ENCODE measurements at regions of chr17 and their contacts with region 1.

Region 1: DNA sequence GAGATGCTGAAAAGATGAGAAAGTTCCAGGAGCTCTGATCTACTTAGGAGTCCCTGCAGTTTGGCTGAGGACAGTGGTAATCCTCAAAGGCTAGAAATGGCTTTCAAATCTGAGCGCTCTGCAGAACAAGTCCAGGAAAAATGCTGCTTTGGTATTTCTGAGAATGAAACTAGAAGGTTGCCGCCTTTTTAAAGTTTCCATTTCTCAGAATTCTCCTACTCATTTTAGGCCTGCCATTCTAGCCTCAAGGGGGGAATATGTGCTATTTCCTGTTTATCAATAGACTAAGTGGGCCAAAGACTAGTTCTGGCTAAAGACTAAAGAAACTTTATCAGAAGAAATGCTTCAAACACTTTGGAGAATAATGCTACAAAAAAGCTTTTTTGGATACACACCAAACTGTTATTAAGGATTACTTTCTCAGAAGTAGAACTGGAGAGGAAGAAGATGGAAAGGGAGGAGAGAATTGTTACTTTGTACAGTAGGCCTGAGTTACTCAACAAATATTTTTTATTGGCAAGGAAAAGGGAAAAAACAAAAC is at the start of gene SLFN12L:
- DNase-seq: no peak
- H3K4me3 ChIP-seq: no peak within 1 kb of the TSS
- H3K27ac ChIP-seq: no peak within 1 kb of the TSS
- H3K4me1 ChIP-seq: no peaks in the 10 kb centered on the region
- H3K27me3 ChIP-seq: no peaks in the 10 kb centered on the region
- CTCF ChIP-seq: no peak
- total RNA-seq, gene SLFN12L: not detected in 2 replicates

Region 2: DNA sequence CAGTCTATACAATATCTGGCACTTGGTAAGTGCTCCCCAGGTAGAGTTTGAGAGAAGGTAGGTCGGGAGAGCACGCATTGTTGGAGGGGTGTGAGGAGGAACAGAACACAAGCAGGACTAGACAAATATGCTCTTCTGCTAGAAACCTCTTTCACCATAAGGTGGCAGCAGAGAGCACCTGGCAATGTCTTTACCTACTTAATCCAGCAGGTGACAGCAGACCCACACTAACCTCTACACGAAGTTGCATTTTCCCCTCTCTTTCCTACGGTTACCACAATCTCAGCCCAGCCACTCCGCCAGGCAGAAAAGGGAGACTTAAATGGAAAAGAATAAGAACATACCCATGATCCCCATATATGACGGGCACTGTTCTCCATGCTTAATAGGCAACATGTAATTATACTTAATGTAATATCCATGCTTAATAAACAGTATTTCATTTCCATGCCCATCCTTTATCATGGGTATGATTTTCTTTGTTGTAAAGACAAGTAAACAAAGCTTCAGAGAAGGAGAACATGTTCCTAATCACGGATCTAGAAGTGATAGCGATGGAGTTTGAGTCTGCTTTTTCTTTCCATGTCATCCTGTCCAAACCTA is 1337.6 kb before region 1 on chr17:
- CTCF ChIA-PET with region 1: no interaction called
- POLR2A ChIA-PET with region 1: no interaction called
- intact Hi-C with region 1: loop called (anchors 10 kb)
- DNase-seq: peak; percentile 50 to 60
- H3K4me3 ChIP-seq: no peak overlapping the region
- H3K27ac ChIP-seq: no peak overlapping the region
- H3K4me1 ChIP-seq: no peaks in the 10 kb centered on the region
- H3K27me3 ChIP-seq: peaks cover 9% of the 10 kb centered on the region
- CTCF ChIP-seq: peak; percentile 98

Region 3: DNA sequence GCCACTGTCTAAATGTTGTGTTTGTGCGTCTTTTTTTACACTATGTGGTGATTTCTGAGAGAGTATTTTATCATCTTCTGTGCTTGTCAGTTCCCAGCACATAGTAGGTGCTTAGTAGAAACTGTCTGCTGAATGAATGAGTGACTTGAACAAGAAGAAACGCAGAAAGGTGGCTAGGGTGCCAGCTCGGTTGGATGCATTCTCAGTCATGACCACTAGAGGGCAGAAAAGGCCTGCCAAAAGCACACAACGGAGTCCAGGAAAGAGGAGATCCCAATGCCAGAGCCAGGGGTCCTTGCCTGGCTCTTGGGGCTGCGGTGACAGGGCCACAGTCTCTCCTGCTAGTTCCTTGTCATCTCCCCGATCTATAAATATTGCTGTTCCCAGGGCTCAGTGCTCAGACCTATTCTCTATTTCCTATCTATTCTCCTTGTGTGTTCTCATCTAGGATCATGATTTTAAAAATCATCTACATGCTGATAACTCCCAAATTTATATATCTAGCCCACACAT is 1117.4 kb before region 1 on chr17:
- CTCF ChIA-PET with region 1: no interaction called
- POLR2A ChIA-PET with region 1: no interaction called
- intact Hi-C with region 1: loop called (anchors 5 kb)
- DNase-seq: peak; percentile 46 to 47
- H3K4me3 ChIP-seq: no peak overlapping the region
- H3K27ac ChIP-seq: no peak overlapping the region
- H3K4me1 ChIP-seq: no peaks in the 10 kb centered on the region
- H3K27me3 ChIP-seq: peaks cover 36% of the 10 kb centered on the region
- CTCF ChIP-seq: peak; percentile 92

Region 4: GRCh38 chr17:34980681-34981537 is 556.8 kb before region 1 on chr17:
- CTCF ChIA-PET with region 1: no interaction called
- POLR2A ChIA-PET with region 1: no interaction called
- intact Hi-C with region 1: loop called (anchors 10 kb)
- DNase-seq: peak; percentile 69 to 84
- H3K4me3 ChIP-seq: peak overlapping the region; percentile 62
- H3K27ac ChIP-seq: peak overlapping the region; percentile 87
- H3K4me1 ChIP-seq: peaks cover 9% of the 10 kb centered on the region
- H3K27me3 ChIP-seq: no peaks in the 10 kb centered on the region
- CTCF ChIP-seq: peak; percentile 48; the same call in 1 of the 2 replicates

Region 5: DNA sequence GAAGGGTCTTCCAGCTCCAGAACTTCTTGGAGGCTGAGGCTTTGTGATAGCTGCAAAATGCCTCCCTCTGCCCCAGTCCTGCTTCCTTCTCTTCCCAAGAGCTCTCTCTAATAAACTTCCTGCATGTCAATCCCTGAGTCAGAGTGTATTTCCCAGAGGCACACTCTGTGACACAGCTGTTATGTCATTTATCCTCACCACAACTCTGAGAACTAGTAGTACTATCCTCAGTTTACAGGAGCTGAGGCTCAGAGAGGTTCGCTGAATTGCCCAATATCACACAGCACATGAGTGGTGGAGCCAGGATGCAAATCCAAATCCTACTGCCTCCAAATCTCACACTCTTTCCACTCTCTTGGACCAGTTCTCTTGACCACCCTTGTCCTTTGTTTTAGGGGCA is 370.0 kb before region 1 on chr17:
- CTCF ChIA-PET with region 1: interaction called, 11 read pairs
- POLR2A ChIA-PET with region 1: no interaction called
- intact Hi-C with region 1: no loop called
- DNase-seq: no peak
- H3K4me3 ChIP-seq: no peak overlapping the region
- H3K27ac ChIP-seq: no peak overlapping the region
- H3K4me1 ChIP-seq: no peaks in the 10 kb centered on the region
- H3K27me3 ChIP-seq: peaks cover 20% of the 10 kb centered on the region
- CTCF ChIP-seq: no peak

Region 6: GRCh38 chr17:35312790-35313711 is 224.6 kb before region 1 on chr17:
- CTCF ChIA-PET with region 1: interaction called, 4 read pairs
- POLR2A ChIA-PET with region 1: no interaction called
- intact Hi-C with region 1: loop called (anchors 1 kb)
- DNase-seq: peak in 1 of 2 experiments; percentile 22
- H3K4me3 ChIP-seq: no peak overlapping the region
- H3K27ac ChIP-seq: no peak overlapping the region
- H3K4me1 ChIP-seq: no peaks in the 10 kb centered on the region
- H3K27me3 ChIP-seq: peaks cover 4% of the 10 kb centered on the region; the same call in 1 of the 2 replicates
- CTCF ChIP-seq: peak; percentile 82

Region 7: DNA sequence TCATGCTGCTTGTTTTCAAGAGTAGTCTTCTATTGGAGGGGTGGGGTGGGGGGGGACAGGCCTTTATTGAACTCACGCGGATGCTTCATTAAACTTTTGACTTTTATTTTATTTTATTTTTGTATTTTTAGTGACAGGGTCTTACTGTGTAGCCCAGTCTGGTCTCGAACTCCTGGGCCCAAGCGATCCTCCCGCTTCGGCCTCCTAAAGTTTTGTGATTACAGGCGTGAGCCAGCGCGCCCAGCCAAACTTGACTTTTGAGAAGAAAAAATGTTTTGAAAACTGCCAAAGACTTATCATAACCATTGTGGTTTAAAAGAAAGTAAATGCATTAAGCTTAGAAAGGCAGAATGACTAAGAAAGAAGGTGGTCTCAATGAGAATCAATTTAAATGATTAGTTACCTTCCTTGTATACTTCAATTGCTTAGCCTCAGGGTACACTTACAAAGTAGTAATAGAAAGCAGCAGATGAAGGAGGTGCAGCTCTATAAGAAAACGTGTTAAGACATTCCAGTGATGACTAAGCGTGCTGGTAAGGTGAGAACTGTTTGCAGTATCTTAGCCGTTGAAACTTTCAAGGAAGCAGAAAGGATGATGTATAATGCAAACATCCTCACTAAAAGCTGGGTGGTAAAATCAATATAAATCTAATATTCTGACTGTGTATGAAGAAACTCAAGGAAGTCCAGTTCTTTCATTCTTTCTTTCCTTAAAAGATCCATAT is 50.7 kb after region 1 on chr17:
- CTCF ChIA-PET with region 1: no interaction called
- POLR2A ChIA-PET with region 1: no interaction called
- intact Hi-C with region 1: no loop called
- DNase-seq: peak; percentile 22 to 99
- H3K4me3 ChIP-seq: peak overlapping the region; percentile 97
- H3K27ac ChIP-seq: peak overlapping the region; percentile 92
- H3K4me1 ChIP-seq: peaks cover 16% of the 10 kb centered on the region
- H3K27me3 ChIP-seq: no peaks in the 10 kb centered on the region
- CTCF ChIP-seq: no peak

Measured in PC-9 (cell line).